Activated CD4-positive, alpha-beta T cell treated with anti-CD3 and anti-CD28 coated beads for 36 hours (primary cell): ENCODE measurements at regions of chr15 and their contacts with region 1.

Region 1: DNA sequence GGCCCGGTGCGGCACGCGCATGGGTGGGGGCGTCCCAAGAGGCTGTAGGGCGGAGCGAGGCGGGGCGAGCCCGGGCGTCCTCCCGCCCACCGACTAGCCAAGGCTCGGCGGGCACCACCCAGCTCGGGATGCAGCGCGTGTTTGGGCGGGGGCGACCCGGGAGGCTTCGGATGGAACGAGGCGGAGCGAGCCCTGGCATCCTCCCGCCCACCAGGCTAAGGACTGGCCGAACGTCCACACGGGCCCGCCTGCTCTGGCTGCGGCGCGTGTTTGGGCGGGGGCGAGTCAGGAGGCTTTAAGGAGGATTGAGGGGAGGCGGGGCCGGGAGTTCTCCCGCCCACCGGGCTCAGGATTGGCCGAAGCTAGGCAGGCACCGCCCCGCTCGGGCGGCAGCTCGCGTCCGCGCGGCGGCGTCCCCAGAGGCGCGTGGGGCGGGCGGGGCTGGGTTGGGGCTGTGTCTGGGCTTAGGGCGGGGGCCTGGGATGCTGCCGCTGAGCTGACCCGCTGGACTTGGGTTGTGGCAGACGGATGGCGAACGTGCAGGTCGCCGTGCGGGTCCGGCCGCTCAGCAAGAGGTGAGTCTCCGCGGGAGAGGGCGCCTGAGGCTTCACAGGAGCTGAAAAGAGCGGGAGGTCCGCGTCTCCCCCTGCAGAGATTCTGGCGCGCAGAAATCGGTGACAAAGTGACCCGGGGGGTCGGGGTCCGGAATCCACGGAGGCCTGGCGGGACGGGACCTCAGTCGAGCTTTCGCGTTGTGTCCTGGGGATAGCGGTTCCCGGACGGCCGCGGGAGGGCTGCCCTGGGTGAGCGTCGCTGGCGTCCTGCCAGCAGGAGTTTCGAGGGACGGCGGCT is at the start of gene STARD9:
- DNase-seq: peak; percentile 97
- ATAC-seq: peak; percentile 92
- H3K4me3 Mint-ChIP-seq: peak within 1 kb of the TSS; percentile 86
- H3K27ac Mint-ChIP-seq: peak within 1 kb of the TSS; percentile 76
- H3K4me1 Mint-ChIP-seq: peaks cover 18% of the 10 kb centered on the region
- H3K27me3 Mint-ChIP-seq: peaks cover 21% of the 10 kb centered on the region
- total RNA-seq, gene STARD9: 4.0 to 4.1 TPM

Region 2: GRCh38 chr15:41660235-41661077 is 915.0 kb before region 1 on chr15 and contains the start of gene MGA:
- CTCF ChIA-PET with region 1: no interaction called
- POLR2A ChIA-PET with region 1: no interaction called
- intact Hi-C with region 1: loop called in 1 of 2 experiments (anchors 2 kb)
- DNase-seq: peak; percentile 94
- ATAC-seq: peak; percentile 89
- H3K4me3 Mint-ChIP-seq: peak within 1 kb of the TSS; percentile 92
- H3K27ac Mint-ChIP-seq: peak within 1 kb of the TSS; percentile 95
- H3K4me1 Mint-ChIP-seq: peaks cover 42% of the 10 kb centered on the region
- H3K27me3 Mint-ChIP-seq: peaks cover 7% of the 10 kb centered on the region
- total RNA-seq, gene MGA: 33.7 to 39.3 TPM

Region 3: DNA sequence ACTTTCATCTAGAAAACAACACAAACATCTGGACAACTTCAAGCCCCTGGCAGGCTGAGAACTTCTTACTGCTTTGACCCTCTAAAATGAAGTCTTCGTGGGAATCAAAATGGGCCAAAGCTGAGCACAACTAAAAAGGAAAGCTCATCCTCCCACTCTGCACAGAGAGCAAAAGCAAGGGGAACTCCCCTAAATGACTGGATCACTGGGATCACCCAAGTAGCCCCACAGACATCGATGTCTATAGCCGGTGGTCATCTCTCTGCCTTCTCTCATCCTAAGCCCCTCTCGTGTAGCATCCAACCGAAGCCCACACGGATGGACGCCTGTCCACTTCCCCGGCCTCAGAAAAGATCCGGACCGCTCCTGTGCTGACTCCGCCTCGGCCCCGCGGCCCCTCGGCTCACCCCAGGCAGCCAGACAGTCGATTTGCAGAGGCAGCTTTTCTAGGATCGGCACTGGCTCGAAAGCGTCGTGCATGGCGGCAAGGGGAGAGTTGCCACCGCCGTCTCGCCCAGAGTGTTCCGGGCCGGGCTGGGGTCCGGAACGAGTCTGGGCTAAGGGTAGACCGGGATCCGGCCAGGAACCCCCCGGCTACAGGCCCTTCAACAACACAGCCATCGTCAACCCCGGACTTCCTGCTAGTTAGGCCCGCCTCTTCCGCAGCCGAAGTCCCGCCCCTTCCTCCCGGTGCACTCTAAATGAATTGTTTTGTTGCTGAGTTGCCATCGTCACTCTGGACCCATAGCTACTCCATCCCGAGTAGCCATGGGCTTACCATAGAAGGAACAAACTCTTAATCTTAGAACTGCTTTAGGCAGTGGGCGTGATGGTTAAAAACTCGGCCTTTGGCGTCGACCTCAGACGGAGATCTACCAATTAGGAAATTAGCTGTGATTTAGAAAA is 367.5 kb before region 1 on chr15 and contains the start of gene VPS39:
- CTCF ChIA-PET with region 1: no interaction called
- POLR2A ChIA-PET with region 1: no interaction called
- intact Hi-C with region 1: loop called in 1 of 2 experiments (anchors 1 kb)
- DNase-seq: peak; percentile 91
- ATAC-seq: peak; percentile 98
- H3K4me3 Mint-ChIP-seq: peak within 1 kb of the TSS; percentile 99
- H3K27ac Mint-ChIP-seq: peak within 1 kb of the TSS; percentile 97
- H3K4me1 Mint-ChIP-seq: peaks cover 32% of the 10 kb centered on the region
- H3K27me3 Mint-ChIP-seq: no peaks in the 10 kb centered on the region
- total RNA-seq, gene VPS39: 49.5 to 56.2 TPM

Region 4: GRCh38 chr15:42548253-42549031 is 27.0 kb before region 1 on chr15 and contains the starts of genes HAUS2 and LRRC57:
- CTCF ChIA-PET with region 1: no interaction called
- POLR2A ChIA-PET with region 1: no interaction called
- intact Hi-C with region 1: loop called (anchors 1 kb)
- DNase-seq: peak; percentile 93
- ATAC-seq: peak; percentile 89
- H3K4me3 Mint-ChIP-seq: peak within 1 kb of the TSS; percentile 96
- H3K27ac Mint-ChIP-seq: peak within 1 kb of the TSS; percentile 96
- H3K4me1 Mint-ChIP-seq: peaks cover 51% of the 10 kb centered on the region
- H3K27me3 Mint-ChIP-seq: no peaks in the 10 kb centered on the region
- total RNA-seq, gene HAUS2: 46.1 to 55.1 TPM
- total RNA-seq, gene LRRC57: 14.8 to 15.2 TPM

Region 5: GRCh38 chr15:42558739-42559138 is 16.7 kb before region 1 on chr15:
- CTCF ChIA-PET with region 1: no interaction called
- POLR2A ChIA-PET with region 1: no interaction called
- intact Hi-C with region 1: no loop called
- DNase-seq: no peak
- ATAC-seq: no peak
- H3K4me3 Mint-ChIP-seq: no peak overlapping the region
- H3K27ac Mint-ChIP-seq: no peak overlapping the region
- H3K4me1 Mint-ChIP-seq: peaks cover 4% of the 10 kb centered on the region
- H3K27me3 Mint-ChIP-seq: no peaks in the 10 kb centered on the region

Region 6: DNA sequence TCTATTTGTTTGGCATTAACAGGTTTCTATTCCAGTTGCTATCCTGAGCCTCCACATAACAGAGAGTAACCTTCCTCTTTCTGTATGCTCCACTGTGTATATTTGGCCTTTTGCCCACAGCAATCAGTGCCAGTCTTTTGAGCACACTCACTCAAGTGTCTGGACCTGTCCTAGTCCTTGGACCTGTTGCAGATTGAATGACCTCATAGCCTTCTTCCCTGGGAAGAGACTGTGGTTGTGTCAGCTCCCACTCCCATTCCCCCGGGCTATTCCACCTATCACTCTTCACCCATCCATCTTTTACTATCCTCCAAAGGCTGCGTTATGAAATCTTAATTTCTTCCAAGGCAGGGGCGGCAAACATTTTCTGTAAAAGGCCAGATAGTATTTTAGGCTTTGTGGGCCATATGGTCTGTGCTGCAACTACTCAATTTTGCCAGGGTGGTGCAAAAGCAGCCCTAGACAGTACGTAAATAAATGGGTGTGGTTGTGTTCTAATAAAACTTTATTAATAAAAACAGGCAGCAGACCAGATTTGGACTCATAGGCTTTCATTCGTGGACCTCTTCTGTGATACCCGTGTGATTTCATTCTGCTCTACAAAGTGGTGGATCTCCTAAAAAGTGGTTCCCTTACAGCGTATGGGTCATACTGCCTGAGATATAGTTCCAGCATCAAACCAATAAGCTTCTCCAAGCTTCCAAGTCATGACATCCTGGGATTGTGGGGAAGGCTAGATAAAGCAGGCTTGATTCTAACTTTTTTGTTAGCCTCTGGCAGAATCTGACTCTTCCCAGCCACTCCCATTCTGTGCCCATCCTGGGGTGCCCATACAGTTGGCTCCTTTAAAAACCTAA is 104.1 kb after region 1 on chr15:
- CTCF ChIA-PET with region 1: no interaction called
- POLR2A ChIA-PET with region 1: no interaction called
- intact Hi-C with region 1: loop called in 1 of 2 experiments (anchors 1 kb)
- DNase-seq: no peak
- ATAC-seq: no peak
- H3K4me3 Mint-ChIP-seq: no peak overlapping the region
- H3K27ac Mint-ChIP-seq: no peak overlapping the region
- H3K4me1 Mint-ChIP-seq: peaks cover 15% of the 10 kb centered on the region
- H3K27me3 Mint-ChIP-seq: no peaks in the 10 kb centered on the region

Region 7: DNA sequence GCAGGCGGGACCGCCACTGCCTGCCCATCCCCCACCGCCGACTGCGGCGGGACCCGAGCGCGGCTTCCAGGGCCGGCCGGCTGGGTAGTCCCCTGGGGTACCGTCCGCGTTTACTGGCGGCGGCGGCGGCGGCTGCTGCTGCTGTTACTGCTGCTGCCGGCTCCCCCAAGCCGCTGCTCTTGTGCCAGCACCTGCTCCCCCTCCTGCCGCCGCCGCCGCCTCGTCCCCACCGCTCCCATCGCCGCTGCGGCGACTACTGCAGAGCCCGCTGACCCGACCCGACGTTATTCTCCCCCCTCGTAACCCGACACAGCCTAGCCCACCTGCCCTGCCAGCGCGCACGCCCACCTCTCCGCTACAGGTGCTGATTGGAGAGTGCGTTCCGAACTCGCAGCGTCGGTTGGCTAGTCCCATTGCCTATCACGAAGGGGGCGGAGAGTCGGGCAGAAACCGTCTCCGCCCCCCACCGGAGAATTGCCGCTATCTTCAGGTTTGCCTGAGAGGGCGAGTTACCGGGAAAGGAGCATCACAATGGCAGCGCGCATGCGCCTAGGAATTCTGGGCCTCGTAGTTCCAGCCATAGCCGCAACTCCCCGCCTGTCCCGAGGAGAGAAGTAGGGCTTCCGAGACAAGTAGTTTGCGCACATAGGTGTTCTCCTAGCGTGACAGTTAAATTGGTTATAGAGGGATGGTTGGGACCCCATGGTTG is 345.3 kb after region 1 on chr15 and contains the start of gene TTBK2:
- CTCF ChIA-PET with region 1: no interaction called
- POLR2A ChIA-PET with region 1: no interaction called
- intact Hi-C with region 1: loop called in 1 of 2 experiments (anchors 1 kb)
- DNase-seq: peak; percentile 98
- ATAC-seq: peak; percentile 95
- H3K4me3 Mint-ChIP-seq: peak within 1 kb of the TSS; percentile 96
- H3K27ac Mint-ChIP-seq: peak within 1 kb of the TSS; percentile 96
- H3K4me1 Mint-ChIP-seq: peaks cover 26% of the 10 kb centered on the region
- H3K27me3 Mint-ChIP-seq: no peaks in the 10 kb centered on the region
- total RNA-seq, gene TTBK2: 9.7 to 10.5 TPM

Region 8: DNA sequence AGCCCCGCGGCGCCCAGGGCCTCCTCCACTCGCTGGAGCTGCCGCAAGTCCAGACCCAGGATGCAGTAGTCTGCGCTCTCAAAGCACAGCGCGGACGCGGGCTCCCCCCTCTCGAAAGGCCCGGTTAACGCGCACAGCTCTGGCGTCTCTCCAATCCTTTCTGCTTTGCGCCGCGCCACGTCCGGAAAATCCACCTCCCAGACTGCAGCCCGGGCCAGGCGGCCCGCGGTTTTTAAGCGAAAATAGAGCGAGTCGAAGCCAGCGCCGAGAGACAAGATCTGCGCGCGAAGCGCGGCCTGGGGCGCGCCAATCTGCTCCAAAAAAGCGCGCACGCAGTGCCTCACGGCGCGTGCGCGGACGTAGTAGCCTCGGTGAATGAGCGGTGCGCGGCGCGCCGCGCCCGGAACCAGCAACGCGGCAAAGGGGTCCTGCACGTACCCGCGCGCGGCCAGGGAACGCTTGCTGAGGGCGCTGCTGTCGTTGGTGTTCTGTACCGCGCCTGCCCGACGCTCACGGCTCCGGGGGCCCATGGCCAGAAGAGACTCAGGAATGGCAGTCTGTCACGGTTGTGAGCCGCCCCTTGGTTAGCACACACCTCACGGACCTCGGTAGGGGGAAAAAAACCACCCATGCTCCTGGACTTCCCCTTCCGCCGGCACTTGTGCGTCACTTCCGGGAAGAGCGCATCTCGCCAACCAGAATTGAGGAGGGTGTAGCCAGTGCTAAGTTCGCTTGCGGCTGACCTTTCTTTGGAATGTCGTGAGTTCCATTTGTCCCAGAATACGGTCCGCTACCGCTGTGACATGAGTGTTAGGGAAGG is 754.8 kb after region 1 on chr15 and contains the start of gene LCMT2:
- CTCF ChIA-PET with region 1: no interaction called
- POLR2A ChIA-PET with region 1: no interaction called
- intact Hi-C with region 1: loop called in 1 of 2 experiments (anchors 1 kb)
- DNase-seq: peak; percentile 93
- ATAC-seq: peak; percentile 91
- H3K4me3 Mint-ChIP-seq: peak within 1 kb of the TSS; percentile 91
- H3K27ac Mint-ChIP-seq: peak within 1 kb of the TSS; percentile 95
- H3K4me1 Mint-ChIP-seq: peaks cover 32% of the 10 kb centered on the region
- H3K27me3 Mint-ChIP-seq: no peaks in the 10 kb centered on the region
- total RNA-seq, gene LCMT2: 7.6 to 8.5 TPM